ENCODE measurements at regions of chr1 and their contacts with region 1.

Region 1: GRCh38 chr1:157399984-157400382 is 152.3 kb downstream of the FCRL5 start:
- DNase-seq: no peak
- H3K4me3 ChIP-seq: no peak overlapping the region
- H3K27ac ChIP-seq: no peak overlapping the region
- H3K4me1 ChIP-seq: peaks cover 11% of the 10 kb centered on the region
- H3K27me3 ChIP-seq: no peaks in the 10 kb centered on the region
- CTCF ChIP-seq: no peak
- POLR2A ChIP-seq: no peak

Region 2: GRCh38 chr1:157325220-157325619 is 74.8 kb before region 1 on chr1:
- CTCF ChIA-PET with region 1: no interaction called
- POLR2A ChIA-PET with region 1: no interaction called
- dilution Hi-C with region 1: no loop called
- intact Hi-C with region 1: no loop called
- DNase-seq: no peak
- H3K4me3 ChIP-seq: no peak overlapping the region
- H3K27ac ChIP-seq: no peak overlapping the region
- H3K4me1 ChIP-seq: no peaks in the 10 kb centered on the region
- H3K27me3 ChIP-seq: peaks cover 2 to 7% of the 10 kb centered on the region in 2 experiments
- CTCF ChIP-seq: no peak
- POLR2A ChIP-seq: no peak

Region 3: GRCh38 chr1:157415661-157416060 is 15.7 kb after region 1 on chr1:
- CTCF ChIA-PET with region 1: no interaction called
- POLR2A ChIA-PET with region 1: no interaction called
- dilution Hi-C with region 1: no loop called
- intact Hi-C with region 1: no loop called
- DNase-seq: no peak
- H3K4me3 ChIP-seq: no peak overlapping the region
- H3K27ac ChIP-seq: no peak overlapping the region
- H3K4me1 ChIP-seq: peaks cover 11% of the 10 kb centered on the region
- H3K27me3 ChIP-seq: no peaks in the 10 kb centered on the region
- CTCF ChIP-seq: no peak
- POLR2A ChIP-seq: no peak

Region 4: GRCh38 chr1:157505481-157506272 is 105.7 kb after region 1 on chr1:
- CTCF ChIA-PET with region 1: no interaction called
- POLR2A ChIA-PET with region 1: no interaction called
- dilution Hi-C with region 1: no loop called
- intact Hi-C with region 1: no loop called
- DNase-seq: peak; percentile 60
- H3K4me3 ChIP-seq: no peak overlapping the region
- H3K27ac ChIP-seq: no peak overlapping the region
- H3K4me1 ChIP-seq: no peaks in the 10 kb centered on the region
- H3K27me3 ChIP-seq: no peaks in the 10 kb centered on the region
- CTCF ChIP-seq: peak; percentile 70 to 81
- POLR2A ChIP-seq: no peak

Region 5: GRCh38 chr1:157963713-157964112 is 563.7 kb after region 1 on chr1:
- CTCF ChIA-PET with region 1: no interaction called
- POLR2A ChIA-PET with region 1: no interaction called
- dilution Hi-C with region 1: no loop called
- intact Hi-C with region 1: loop called (anchors 10 kb)
- DNase-seq: peak; percentile 63
- H3K4me3 ChIP-seq: no peak overlapping the region
- H3K27ac ChIP-seq: no peak overlapping the region
- H3K4me1 ChIP-seq: peaks cover 7% of the 10 kb centered on the region
- H3K27me3 ChIP-seq: peaks cover 10 to 18% of the 10 kb centered on the region in 2 experiments
- CTCF ChIP-seq: peak; percentile 76 to 78
- POLR2A ChIP-seq: no peak

Measured in endothelial cell of umbilical vein (primary cell).